ENCODE measurements at regions of chr22 and their contacts with region 1.

Region 1: DNA sequence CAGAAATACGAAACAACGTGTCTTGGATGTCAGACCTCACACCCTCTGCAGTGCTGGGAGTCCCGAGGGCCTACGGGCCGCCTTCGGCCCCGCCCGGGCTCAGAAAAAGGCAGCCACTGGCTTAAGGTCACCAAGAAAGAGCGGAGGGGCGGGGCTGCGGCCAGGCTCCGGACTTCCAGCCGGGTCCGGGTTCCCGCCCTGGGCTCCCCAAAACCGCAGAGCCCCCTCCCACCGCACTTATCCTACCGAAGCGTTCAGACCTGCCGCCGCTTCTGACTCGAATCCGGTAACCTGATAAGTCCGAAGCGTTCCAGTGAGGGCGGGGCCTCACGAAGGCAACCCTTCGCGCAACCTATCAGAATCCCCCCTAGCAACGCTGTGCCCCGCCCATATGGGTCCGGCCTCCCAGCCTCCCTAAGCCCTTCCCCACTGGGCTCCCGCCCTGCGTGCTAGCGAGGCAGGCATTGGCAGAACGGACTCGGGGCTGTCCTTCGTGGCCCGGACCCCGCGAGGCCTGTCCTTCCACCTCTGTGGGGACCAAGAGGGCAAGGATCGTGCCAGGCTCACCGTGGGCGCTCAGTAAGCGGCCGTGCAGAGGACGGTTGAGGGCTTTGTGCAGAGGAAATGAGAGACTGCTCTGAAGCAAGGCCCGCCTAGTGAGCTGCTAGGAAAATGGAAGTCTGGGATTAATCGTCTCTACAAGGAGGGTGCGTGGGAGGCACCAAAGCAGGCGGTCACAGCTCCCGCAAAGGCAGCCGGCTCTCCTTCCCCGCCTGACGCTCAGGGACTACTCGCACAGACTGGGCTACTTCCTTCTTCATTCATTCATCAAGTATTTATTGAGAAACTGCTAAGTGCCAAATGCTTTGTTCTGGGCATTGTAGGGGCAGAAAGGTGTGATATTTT is at the start of gene NAGA:
- DNase-seq: peak; percentile 75 to 96 (median 88)
- ATAC-seq: peak; percentile 98
- H3K4me3 ChIP-seq: peak within 1 kb of the TSS; percentile 89 to 97
- H3K4me3 Mint-ChIP-seq: peak within 1 kb of the TSS; percentile 88
- H3K27ac ChIP-seq: peak within 1 kb of the TSS; percentile 50 to 71
- H3K27ac Mint-ChIP-seq: peak within 1 kb of the TSS; percentile 86
- H3K4me1 ChIP-seq: peaks cover 23% of the 10 kb centered on the region
- H3K4me1 Mint-ChIP-seq: peaks cover 37% of the 10 kb centered on the region
- H3K27me3 ChIP-seq: no peaks in the 10 kb centered on the region
- H3K27me3 Mint-ChIP-seq: no peaks in the 10 kb centered on the region
- CTCF ChIP-seq: no peak
- total RNA-seq, gene NAGA: 1.8 to 2.0 TPM

Region 2: DNA sequence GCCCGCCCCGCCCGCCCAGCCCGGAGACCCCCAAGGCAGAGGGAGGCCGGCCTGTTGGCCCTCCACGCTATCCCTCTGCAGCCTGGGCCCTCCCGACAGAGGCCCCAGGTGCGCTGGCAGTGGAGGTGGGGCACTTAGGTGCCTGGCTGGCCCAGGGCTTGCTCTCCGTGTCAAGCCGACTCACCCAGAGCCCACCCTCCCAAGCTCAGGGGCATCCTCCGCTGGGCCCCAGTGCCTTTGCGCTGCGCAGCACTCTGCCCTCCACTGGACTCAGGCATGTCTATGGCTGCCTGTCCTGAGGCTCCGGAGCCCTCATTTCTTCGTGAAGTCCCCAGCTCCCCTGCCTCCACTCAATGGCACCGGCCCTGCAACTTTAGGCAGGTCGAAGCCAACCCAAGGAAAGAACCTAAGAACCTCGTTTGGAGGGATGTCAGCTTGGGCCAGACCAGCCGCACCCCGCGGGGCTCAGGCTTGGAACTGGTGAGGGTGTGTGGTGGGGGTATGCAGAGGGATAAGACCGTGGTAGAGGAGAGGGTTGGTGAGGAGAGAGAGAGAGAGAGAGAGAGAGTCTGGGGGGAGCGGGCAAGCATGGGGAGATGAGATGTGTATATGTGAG is 112.7 kb before region 1 on chr22:
- CTCF ChIA-PET with region 1: no interaction called
- POLR2A ChIA-PET with region 1: no interaction called
- intact Hi-C with region 1: loop called in 1 of 2 experiments (anchors 2 kb)
- DNase-seq: peak in 1 of 9 experiments; percentile 32
- ATAC-seq: peak; percentile 35
- H3K4me3 ChIP-seq: no peak overlapping the region
- H3K4me3 Mint-ChIP-seq: peak overlapping the region; percentile 11
- H3K27ac ChIP-seq: no peak overlapping the region
- H3K27ac Mint-ChIP-seq: no peak overlapping the region
- H3K4me1 ChIP-seq: no peaks in the 10 kb centered on the region
- H3K4me1 Mint-ChIP-seq: peaks cover 3% of the 10 kb centered on the region
- H3K27me3 ChIP-seq: peaks cover 0 to 6% of the 10 kb centered on the region in 2 experiments
- H3K27me3 Mint-ChIP-seq: no peaks in the 10 kb centered on the region
- CTCF ChIP-seq: peak; percentile 53

Region 3: DNA sequence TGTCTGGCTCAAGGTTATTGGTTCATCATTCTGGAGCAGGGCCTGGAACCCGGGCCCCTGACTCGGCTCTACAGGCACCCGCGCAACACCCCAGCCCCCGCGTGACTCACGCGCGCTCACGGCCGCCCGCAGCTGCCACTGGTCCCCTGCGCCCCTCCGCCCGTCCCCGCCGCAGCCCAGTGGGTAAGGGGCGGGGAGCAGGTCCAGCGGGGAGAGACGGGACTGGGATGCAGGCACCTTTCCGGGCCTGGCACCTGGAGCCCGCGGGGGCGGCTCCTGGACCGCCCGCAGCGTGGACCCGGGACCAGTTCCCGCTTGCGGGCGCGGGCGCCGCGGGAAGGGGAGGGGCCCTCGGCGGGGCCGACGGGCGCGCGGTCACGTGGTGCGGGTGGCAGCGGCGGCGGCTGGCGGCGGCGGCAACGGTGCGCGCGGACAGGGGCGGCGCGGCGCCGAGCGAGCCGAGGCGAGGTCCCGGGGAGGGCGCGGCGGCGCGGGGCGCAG is 94.3 kb before region 1 on chr22:
- CTCF ChIA-PET with region 1: no interaction called
- POLR2A ChIA-PET with region 1: no interaction called
- intact Hi-C with region 1: loop called in 1 of 2 experiments (anchors 5 kb)
- DNase-seq: peak in 7 of 9 experiments; percentile 16 to 63 (median 40)
- ATAC-seq: peak; percentile 59
- H3K4me3 ChIP-seq: peak overlapping the region in 1 of 2 experiments; percentile 41
- H3K4me3 Mint-ChIP-seq: peak overlapping the region; percentile 75
- H3K27ac ChIP-seq: no peak overlapping the region
- H3K27ac Mint-ChIP-seq: no peak overlapping the region
- H3K4me1 ChIP-seq: peaks cover 5% of the 10 kb centered on the region
- H3K4me1 Mint-ChIP-seq: peaks cover 9% of the 10 kb centered on the region
- H3K27me3 ChIP-seq: peaks cover 7 to 11% of the 10 kb centered on the region in 2 experiments
- H3K27me3 Mint-ChIP-seq: peaks cover 48% of the 10 kb centered on the region
- CTCF ChIP-seq: no peak

Region 4: GRCh38 chr22:41998361-41999275 is 72.2 kb before region 1 on chr22 and contains the start of gene WBP2NL:
- CTCF ChIA-PET with region 1: no interaction called
- POLR2A ChIA-PET with region 1: interaction called, 7 read pairs
- intact Hi-C with region 1: loop called (anchors 2 kb)
- DNase-seq: peak; percentile 77 to 95 (median 88)
- ATAC-seq: peak; percentile 95
- H3K4me3 ChIP-seq: peak within 1 kb of the TSS; percentile 70 to 76
- H3K4me3 Mint-ChIP-seq: peak within 1 kb of the TSS; percentile 97
- H3K27ac ChIP-seq: peak within 1 kb of the TSS; percentile 43 to 60
- H3K27ac Mint-ChIP-seq: peak within 1 kb of the TSS; percentile 97
- H3K4me1 ChIP-seq: peaks cover 13% of the 10 kb centered on the region
- H3K4me1 Mint-ChIP-seq: peaks cover 16% of the 10 kb centered on the region
- H3K27me3 ChIP-seq: no peaks in the 10 kb centered on the region
- H3K27me3 Mint-ChIP-seq: peaks cover 4% of the 10 kb centered on the region
- CTCF ChIP-seq: no peak
- total RNA-seq, gene WBP2NL: 0.28 to 0.60 TPM

Region 5: DNA sequence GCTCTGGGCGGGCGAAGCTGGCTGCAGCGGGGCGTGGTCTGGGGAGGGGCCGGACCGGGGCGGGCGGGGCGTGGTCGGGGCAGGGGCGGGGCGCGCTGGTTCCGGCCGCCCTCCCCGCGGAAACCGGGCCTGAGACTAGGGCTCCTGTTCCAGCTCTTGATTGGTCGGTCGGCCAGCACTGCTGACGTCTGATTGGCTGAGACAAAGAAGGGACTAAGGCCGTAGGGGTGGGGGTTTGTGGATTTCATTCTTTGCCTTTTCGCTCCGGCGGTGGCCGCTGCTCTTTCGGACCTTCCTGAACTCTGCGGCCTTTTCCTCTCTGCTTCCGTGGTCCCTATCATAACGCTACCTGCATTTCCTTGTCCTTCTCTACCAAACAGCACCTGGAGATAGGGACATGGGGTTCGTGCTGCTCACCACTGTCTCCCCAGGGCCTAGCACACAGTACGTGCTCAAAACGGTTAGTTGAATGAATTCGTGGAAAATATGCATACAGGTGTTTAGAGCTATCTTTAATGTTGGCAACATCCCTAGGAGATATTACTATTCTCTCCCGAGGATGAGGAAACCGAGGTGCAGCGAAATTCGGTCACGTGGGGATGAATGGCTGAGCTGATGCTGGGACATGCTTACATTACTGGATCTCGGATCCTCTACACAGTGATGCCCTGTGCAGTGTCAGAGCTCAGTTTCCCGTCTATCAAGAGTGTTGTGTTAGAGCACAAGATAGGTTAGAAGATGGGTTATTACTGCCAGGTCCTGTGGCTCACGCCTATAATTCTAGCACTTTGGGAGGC is 298.7 kb after region 1 on chr22:
- CTCF ChIA-PET with region 1: no interaction called
- POLR2A ChIA-PET with region 1: no interaction called
- intact Hi-C with region 1: loop called in 1 of 2 experiments (anchors 2 kb)
- DNase-seq: peak; percentile 49 to 91 (median 82)
- ATAC-seq: peak; percentile 97
- H3K4me3 ChIP-seq: peak overlapping the region; percentile 60 to 86
- H3K4me3 Mint-ChIP-seq: peak overlapping the region; percentile 85
- H3K27ac ChIP-seq: no peak overlapping the region
- H3K27ac Mint-ChIP-seq: peak overlapping the region; percentile 9
- H3K4me1 ChIP-seq: peaks cover 18% of the 10 kb centered on the region
- H3K4me1 Mint-ChIP-seq: peaks cover 19% of the 10 kb centered on the region
- H3K27me3 ChIP-seq: peaks cover 9 to 24% of the 10 kb centered on the region in 2 experiments
- H3K27me3 Mint-ChIP-seq: peaks cover 23% of the 10 kb centered on the region
- CTCF ChIP-seq: no peak

Region 6: GRCh38 chr22:42500161-42500835 is 429.5 kb after region 1 on chr22:
- CTCF ChIA-PET with region 1: no interaction called
- POLR2A ChIA-PET with region 1: no interaction called
- intact Hi-C with region 1: loop called in 1 of 2 experiments (anchors 1 kb)
- DNase-seq: peak; percentile 67 to 91 (median 82)
- ATAC-seq: peak; percentile 94
- H3K4me3 ChIP-seq: peak overlapping the region; percentile 42 to 48
- H3K4me3 Mint-ChIP-seq: peak overlapping the region; percentile 72
- H3K27ac ChIP-seq: no peak overlapping the region
- H3K27ac Mint-ChIP-seq: no peak overlapping the region
- H3K4me1 ChIP-seq: peaks cover 7% of the 10 kb centered on the region
- H3K4me1 Mint-ChIP-seq: peaks cover 4% of the 10 kb centered on the region
- H3K27me3 ChIP-seq: no peaks in the 10 kb centered on the region
- H3K27me3 Mint-ChIP-seq: no peaks in the 10 kb centered on the region
- CTCF ChIP-seq: no peak